Transverse colon (tissue), 4 donors: ENCODE measurements at regions of chr19 and their contacts with region 1.

Region 1: GRCh38 chr19:21505459-21506451 is at the start of gene ZNF429:
- DNase-seq: peak; percentile 94
- H3K4me3 ChIP-seq: peak within 1 kb of the TSS; percentile 69 to 85 (median 76)
- H3K27ac ChIP-seq: peak within 1 kb of the TSS; percentile 92 to 95 (median 94)
- H3K4me1 ChIP-seq: peaks cover 4 to 19% (median 8%) of the 10 kb centered on the region in 4 donors
- H3K27me3 ChIP-seq: no peaks in the 10 kb centered on the region
- CTCF ChIP-seq: no peak
- EP300 ChIP-seq: no peak
- POLR2A ChIP-seq: peak; percentile 70
- total RNA-seq, gene ZNF429: 13.5 to 47.0 (median 18.2) TPM

Region 2: GRCh38 chr19:21532904-21533303 is 27.1 kb after region 1 on chr19:
- in situ Hi-C with region 1: no loop called
- intact Hi-C with region 1: loop called (anchors 1 kb)
- DNase-seq: no peak
- H3K4me3 ChIP-seq: no peak overlapping the region
- H3K27ac ChIP-seq: no peak overlapping the region
- H3K4me1 ChIP-seq: no peaks in the 10 kb centered on the region
- H3K27me3 ChIP-seq: no peaks in the 10 kb centered on the region
- CTCF ChIP-seq: no peak
- EP300 ChIP-seq: no peak
- POLR2A ChIP-seq: no peak